Gastrocnemius medialis (tissue), 4 donors: ENCODE measurements at regions of chr4 and their contacts with region 1.

Region 1: GRCh38 chr4:55395529-55396307 is at the start of gene TMEM165:
- DNase-seq: peak; percentile 88
- ATAC-seq: peak; percentile 89 to 90
- H3K4me3 ChIP-seq: peak within 1 kb of the TSS; percentile 72 to 95 (median 77)
- H3K27ac ChIP-seq: peak within 1 kb of the TSS; percentile 83 to 96 (median 91)
- H3K4me1 ChIP-seq: peaks cover 32 to 38% of the 10 kb centered on the region in 2 donors
- H3K27me3 ChIP-seq: no peaks in the 10 kb centered on the region
- CTCF ChIP-seq: peak in 1 of 5 experiments; percentile 15
- POLR2A ChIP-seq: peak; percentile 92 to 93
- total RNA-seq, gene TMEM165: 23.5 to 80.3 (median 48.9) TPM

Region 2: GRCh38 chr4:55546756-55547465 is 151.2 kb after region 1 on chr4 and contains the start of gene CLOCK:
- in situ Hi-C with region 1: loop called in 1 of 4 experiments (anchors 10 kb)
- intact Hi-C with region 1: loop called (anchors 1 kb)
- DNase-seq: peak; percentile 75 to 82
- ATAC-seq: peak; percentile 86 to 87
- H3K4me3 ChIP-seq: peak within 1 kb of the TSS; percentile 81 to 97 (median 93)
- H3K27ac ChIP-seq: peak within 1 kb of the TSS; percentile 98 to 99 (median 98)
- H3K4me1 ChIP-seq: peaks cover 19 to 25% of the 10 kb centered on the region in 2 donors
- H3K27me3 ChIP-seq: no peaks in the 10 kb centered on the region
- CTCF ChIP-seq: peak; percentile 30 to 71 (median 67)
- POLR2A ChIP-seq: peak; percentile 72 to 76
- total RNA-seq, gene CLOCK: 21.9 to 60.7 (median 34.2) TPM

Region 3: DNA sequence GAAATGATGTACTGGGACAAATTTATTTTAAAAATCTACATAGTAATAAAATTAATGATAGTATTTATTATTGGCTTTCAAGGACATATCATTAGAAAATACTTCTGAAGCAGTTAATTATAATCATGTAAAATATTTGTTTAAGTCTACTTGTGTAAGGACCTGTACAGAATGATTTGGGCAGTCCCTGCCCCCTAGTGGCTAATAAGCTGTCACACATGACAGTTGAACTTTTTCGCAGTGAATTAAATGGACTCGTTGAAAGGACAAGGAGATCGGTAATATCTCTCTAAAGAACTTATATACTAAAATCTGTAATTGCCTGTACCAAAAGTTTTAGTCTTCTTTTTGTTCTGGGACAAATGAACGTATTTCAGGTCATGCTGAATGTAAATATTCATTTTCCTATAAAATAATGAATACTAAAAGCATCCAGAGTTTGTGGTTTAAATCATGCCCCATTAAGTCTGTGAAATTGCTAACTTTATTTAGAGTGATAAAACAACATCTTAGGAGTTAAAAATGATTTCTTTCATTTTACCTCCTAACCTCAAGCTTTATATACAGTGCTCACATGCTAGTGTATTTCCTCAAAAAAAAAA is 471.4 kb after region 1 on chr4:
- in situ Hi-C with region 1: loop called in 1 of 4 experiments (anchors 25 kb)
- intact Hi-C with region 1: loop called (anchors 5 kb)
- DNase-seq: peak in 1 of 2 donors; percentile 18
- ATAC-seq: peak; percentile 86 to 90
- H3K4me3 ChIP-seq: no peak overlapping the region
- H3K27ac ChIP-seq: peak overlapping the region in 2 of 4 donors; percentile 69
- H3K4me1 ChIP-seq: peaks cover 6 to 11% of the 10 kb centered on the region in 2 donors
- H3K27me3 ChIP-seq: no peaks in the 10 kb centered on the region
- CTCF ChIP-seq: peak; percentile 59 to 85 (median 69)
- POLR2A ChIP-seq: no peak